CD8-positive, alpha-beta memory T cell (primary cell): ENCODE measurements at regions of chr1 and their contacts with region 1.

Region 1: GRCh38 chr1:212070720-212071302 is 35.3 kb downstream of the DTL start:
- DNase-seq: peak in 2 of 5 donors; percentile 36 to 43
- H3K4me3 ChIP-seq: no peak overlapping the region
- H3K4me3 Mint-ChIP-seq: no peak overlapping the region
- H3K27ac ChIP-seq: no peak overlapping the region
- H3K27ac Mint-ChIP-seq: peak overlapping the region in 1 of 8 donors; percentile 61
- H3K4me1 ChIP-seq: no peaks in the 10 kb centered on the region
- H3K4me1 Mint-ChIP-seq: no peaks in the 10 kb centered on the region
- H3K27me3 ChIP-seq: no peaks in the 10 kb centered on the region
- H3K27me3 Mint-ChIP-seq: no peaks in the 10 kb centered on the region

Region 2: DNA sequence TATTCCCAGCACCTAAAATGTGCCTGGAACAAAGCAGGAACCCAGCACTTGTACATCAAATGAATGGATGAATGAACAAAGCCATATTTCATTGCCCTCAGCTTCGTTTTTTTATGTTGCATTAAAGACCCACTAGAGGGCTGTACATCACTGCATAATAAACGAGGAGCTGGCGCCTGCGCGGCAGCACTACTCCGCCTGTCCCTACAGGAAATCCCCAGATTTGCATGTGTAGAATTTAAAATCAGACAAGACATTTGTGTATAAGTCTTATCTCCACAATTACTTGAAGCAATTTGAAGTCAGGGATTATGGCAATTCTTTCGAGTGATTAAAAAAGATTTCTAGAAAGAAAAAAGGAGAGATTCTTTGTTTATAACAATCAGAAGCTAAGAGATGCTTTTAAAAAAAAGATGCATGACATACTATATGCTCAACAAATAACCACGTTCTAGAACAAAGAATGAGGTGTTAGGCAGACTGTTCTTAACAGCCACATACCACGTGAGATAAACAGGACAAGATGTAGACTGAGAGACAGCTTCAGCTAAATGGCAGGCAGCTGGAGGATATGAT is 390.0 kb before region 1 on chr1:
- CTCF ChIA-PET with region 1: interaction called, 20 read pairs
- POLR2A ChIA-PET with region 1: no interaction called
- DNase-seq: peak; percentile 64 to 86 (median 77)
- H3K4me3 ChIP-seq: no peak overlapping the region
- H3K4me3 Mint-ChIP-seq: peak overlapping the region in 6 of 7 donors; percentile 15 to 50 (median 37)
- H3K27ac ChIP-seq: no peak overlapping the region
- H3K27ac Mint-ChIP-seq: peak overlapping the region; percentile 90 to 98 (median 94)
- H3K4me1 ChIP-seq: peaks cover 14% of the 10 kb centered on the region
- H3K4me1 Mint-ChIP-seq: peaks cover 24 to 30% (median 25%) of the 10 kb centered on the region in 3 donors
- H3K27me3 ChIP-seq: no peaks in the 10 kb centered on the region
- H3K27me3 Mint-ChIP-seq: no peaks in the 10 kb centered on the region

Region 3: DNA sequence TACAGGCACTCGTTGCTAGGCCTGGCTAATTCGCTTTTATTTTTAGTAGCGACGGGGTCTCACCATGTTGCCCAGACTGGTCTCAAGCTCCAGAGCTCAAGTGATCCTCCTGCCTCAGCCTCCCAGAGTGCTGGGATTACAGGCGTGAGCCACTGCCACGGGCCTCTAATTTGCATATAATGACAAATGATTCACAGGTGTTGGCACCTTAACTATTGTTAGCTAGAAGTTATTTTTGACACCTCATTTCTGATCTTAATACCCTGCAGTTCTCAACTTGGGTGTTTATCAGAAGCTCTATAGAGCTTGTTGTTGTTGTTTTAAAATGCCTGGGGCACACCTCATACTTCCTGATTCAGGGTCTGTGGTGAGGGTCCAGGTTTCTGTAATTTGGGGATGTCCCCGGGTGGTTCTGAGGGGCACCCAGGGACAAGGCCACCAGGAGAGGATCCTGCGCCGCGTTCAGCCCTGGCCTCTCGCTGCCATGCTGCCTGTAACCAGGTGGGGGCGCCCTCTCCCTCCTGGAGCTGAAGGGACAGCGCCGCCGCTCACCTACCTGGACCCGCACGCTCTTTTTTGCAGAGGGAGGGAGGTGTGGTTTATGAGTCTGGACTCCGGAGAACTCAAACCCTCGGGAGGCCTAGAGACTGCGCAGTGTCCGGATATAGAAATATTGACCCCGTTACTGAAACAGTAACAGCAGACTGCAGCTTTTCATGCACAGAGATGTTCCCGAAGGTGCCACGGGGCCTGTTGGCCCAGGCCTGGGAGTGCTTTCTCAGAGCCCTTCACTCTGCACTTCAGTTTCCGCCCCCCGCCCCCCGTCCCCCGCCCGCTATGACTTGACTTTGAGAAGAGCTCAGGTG is 372.4 kb before region 1 on chr1:
- CTCF ChIA-PET with region 1: interaction called, 10 read pairs
- POLR2A ChIA-PET with region 1: no interaction called
- DNase-seq: peak; percentile 72 to 84 (median 76)
- H3K4me3 ChIP-seq: peak overlapping the region; percentile 51
- H3K4me3 Mint-ChIP-seq: peak overlapping the region in 6 of 7 donors; percentile 65 to 84 (median 76)
- H3K27ac ChIP-seq: no peak overlapping the region
- H3K27ac Mint-ChIP-seq: peak overlapping the region in 3 of 8 donors; percentile 61 to 90 (median 78)
- H3K4me1 ChIP-seq: peaks cover 16% of the 10 kb centered on the region
- H3K4me1 Mint-ChIP-seq: peaks cover 35 to 53% (median 42%) of the 10 kb centered on the region in 3 donors
- H3K27me3 ChIP-seq: no peaks in the 10 kb centered on the region
- H3K27me3 Mint-ChIP-seq: no peaks in the 10 kb centered on the region

Region 4: GRCh38 chr1:212021563-212021962 is 49.2 kb before region 1 on chr1:
- CTCF ChIA-PET with region 1: no interaction called
- POLR2A ChIA-PET with region 1: no interaction called
- DNase-seq: no peak
- H3K4me3 ChIP-seq: no peak overlapping the region
- H3K4me3 Mint-ChIP-seq: no peak overlapping the region
- H3K27ac ChIP-seq: no peak overlapping the region
- H3K27ac Mint-ChIP-seq: no peak overlapping the region
- H3K4me1 ChIP-seq: no peaks in the 10 kb centered on the region
- H3K4me1 Mint-ChIP-seq: peaks cover 5 to 8% (median 8%) of the 10 kb centered on the region in 3 donors
- H3K27me3 ChIP-seq: no peaks in the 10 kb centered on the region
- H3K27me3 Mint-ChIP-seq: no peaks in the 10 kb centered on the region

Region 5: DNA sequence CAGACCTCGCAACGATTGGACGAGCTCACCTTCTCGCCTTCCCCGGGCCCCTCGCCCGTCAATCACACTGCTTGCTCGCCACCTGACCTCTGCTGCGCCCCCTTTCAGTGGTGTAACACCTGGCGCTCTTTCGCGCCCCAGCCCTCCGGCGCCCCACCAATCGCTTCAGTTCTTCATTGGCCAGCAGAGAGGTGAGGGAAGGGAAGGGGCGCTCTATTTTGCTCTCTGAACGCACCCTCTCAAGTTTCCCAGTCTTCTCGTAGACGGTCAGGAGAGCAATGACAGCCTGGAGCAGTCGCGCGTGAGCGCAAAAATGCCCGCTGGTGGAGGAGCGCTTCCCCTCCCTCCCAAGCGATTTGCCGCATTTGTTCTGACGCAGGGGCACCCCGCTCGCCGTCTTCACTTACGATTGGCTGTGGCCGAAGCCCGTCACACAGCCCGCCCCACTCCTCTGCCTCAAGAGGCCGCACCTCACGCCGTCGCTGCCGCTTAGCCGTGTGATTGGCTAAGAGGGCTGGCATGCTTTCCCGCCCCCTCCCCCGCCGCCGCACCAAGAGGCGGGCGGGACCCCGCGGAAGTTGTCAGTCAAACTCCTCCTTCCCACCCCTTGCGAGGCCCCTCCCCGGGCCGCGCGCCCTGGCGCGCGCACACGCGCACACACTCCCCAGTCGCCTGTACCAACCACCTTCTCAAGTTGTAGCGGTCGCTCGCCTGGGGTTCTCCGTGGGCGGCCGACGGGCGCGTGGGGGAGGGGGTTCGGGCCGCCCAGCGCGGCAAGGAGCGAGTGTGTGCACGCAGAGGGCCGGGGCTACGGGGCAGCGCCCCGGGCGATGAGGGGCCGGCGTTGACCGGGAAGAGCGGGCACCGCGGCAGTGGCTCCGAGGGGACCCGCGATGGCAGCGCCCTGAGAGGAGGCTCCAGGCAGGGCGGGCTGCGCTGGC is 214.2 kb after region 1 on chr1 and contains the start of gene PPP2R5A:
- CTCF ChIA-PET with region 1: interaction called, 34 read pairs
- POLR2A ChIA-PET with region 1: interaction called, 8 read pairs
- DNase-seq: peak; percentile 97 to 99 (median 99)
- H3K4me3 ChIP-seq: peak within 1 kb of the TSS; percentile 98
- H3K4me3 Mint-ChIP-seq: peak within 1 kb of the TSS; percentile 96 to 100 (median 99)
- H3K27ac ChIP-seq: peak within 1 kb of the TSS; percentile 97
- H3K27ac Mint-ChIP-seq: peak within 1 kb of the TSS; percentile 91 to 100 (median 98)
- H3K4me1 ChIP-seq: peaks cover 33% of the 10 kb centered on the region
- H3K4me1 Mint-ChIP-seq: peaks cover 34 to 53% (median 45%) of the 10 kb centered on the region in 3 donors
- H3K27me3 ChIP-seq: no peaks in the 10 kb centered on the region
- H3K27me3 Mint-ChIP-seq: no peaks in the 10 kb centered on the region
- total RNA-seq, gene PPP2R5A: 46.1 to 46.9 TPM

Region 6: GRCh38 chr1:212291505-212292134 is 220.8 kb after region 1 on chr1:
- CTCF ChIA-PET with region 1: interaction called, 44 read pairs
- POLR2A ChIA-PET with region 1: interaction called, 7 read pairs
- DNase-seq: peak in 2 of 5 donors; percentile 49 to 59
- H3K4me3 ChIP-seq: no peak overlapping the region
- H3K4me3 Mint-ChIP-seq: peak overlapping the region; percentile 25 to 73 (median 53)
- H3K27ac ChIP-seq: no peak overlapping the region
- H3K27ac Mint-ChIP-seq: peak overlapping the region; percentile 2 to 76 (median 46)
- H3K4me1 ChIP-seq: peaks cover 83% of the 10 kb centered on the region
- H3K4me1 Mint-ChIP-seq: peaks cover 80 to 95% (median 91%) of the 10 kb centered on the region in 3 donors
- H3K27me3 ChIP-seq: no peaks in the 10 kb centered on the region
- H3K27me3 Mint-ChIP-seq: no peaks in the 10 kb centered on the region

Region 7: GRCh38 chr1:212344905-212345304 is 274.1 kb after region 1 on chr1:
- CTCF ChIA-PET with region 1: interaction called, 12 read pairs
- POLR2A ChIA-PET with region 1: no interaction called
- DNase-seq: no peak
- H3K4me3 ChIP-seq: no peak overlapping the region
- H3K4me3 Mint-ChIP-seq: no peak overlapping the region
- H3K27ac ChIP-seq: no peak overlapping the region
- H3K27ac Mint-ChIP-seq: peak overlapping the region in 1 of 8 donors; percentile 9
- H3K4me1 ChIP-seq: no peaks in the 10 kb centered on the region
- H3K4me1 Mint-ChIP-seq: peaks cover 19 to 39% (median 23%) of the 10 kb centered on the region in 3 donors
- H3K27me3 ChIP-seq: no peaks in the 10 kb centered on the region
- H3K27me3 Mint-ChIP-seq: no peaks in the 10 kb centered on the region

Region 8: DNA sequence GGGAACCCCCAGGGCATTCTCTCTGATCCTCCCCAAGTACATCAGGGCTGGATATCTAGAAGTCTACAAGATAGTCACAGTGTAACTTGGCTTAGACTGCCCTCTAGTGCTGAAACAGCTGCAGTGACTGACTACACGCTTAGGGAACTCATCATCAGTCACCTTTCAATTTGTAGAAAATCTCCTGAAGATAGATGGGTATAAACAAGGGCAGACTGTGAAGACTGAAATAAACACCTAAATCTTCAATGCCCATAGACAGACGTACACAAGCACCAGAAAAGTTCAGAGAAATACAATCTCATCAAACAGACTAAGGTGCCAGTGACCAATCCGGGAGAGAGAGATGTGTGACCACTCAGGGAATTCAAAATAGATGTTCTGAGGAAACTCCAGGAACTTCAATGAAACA is 297.3 kb after region 1 on chr1:
- CTCF ChIA-PET with region 1: interaction called, 46 read pairs
- POLR2A ChIA-PET with region 1: no interaction called
- DNase-seq: peak; percentile 13 to 64 (median 40)
- H3K4me3 ChIP-seq: no peak overlapping the region
- H3K4me3 Mint-ChIP-seq: no peak overlapping the region
- H3K27ac ChIP-seq: no peak overlapping the region
- H3K27ac Mint-ChIP-seq: peak overlapping the region in 2 of 8 donors; percentile 6 to 25
- H3K4me1 ChIP-seq: no peaks in the 10 kb centered on the region
- H3K4me1 Mint-ChIP-seq: peaks cover 0 to 11% (median 0%) of the 10 kb centered on the region in 3 donors
- H3K27me3 ChIP-seq: no peaks in the 10 kb centered on the region
- H3K27me3 Mint-ChIP-seq: no peaks in the 10 kb centered on the region

Region 9: GRCh38 chr1:212749821-212750535 is 679.2 kb after region 1 on chr1:
- CTCF ChIA-PET with region 1: no interaction called
- POLR2A ChIA-PET with region 1: no interaction called
- DNase-seq: peak in 1 of 5 donors; percentile 24
- H3K4me3 ChIP-seq: no peak overlapping the region
- H3K4me3 Mint-ChIP-seq: peak overlapping the region in 2 of 7 donors; percentile 6 to 23
- H3K27ac ChIP-seq: no peak overlapping the region
- H3K27ac Mint-ChIP-seq: peak overlapping the region in 6 of 8 donors; percentile 0 to 85 (median 45)
- H3K4me1 ChIP-seq: peaks cover 44% of the 10 kb centered on the region
- H3K4me1 Mint-ChIP-seq: peaks cover 28 to 44% (median 37%) of the 10 kb centered on the region in 3 donors
- H3K27me3 ChIP-seq: no peaks in the 10 kb centered on the region
- H3K27me3 Mint-ChIP-seq: no peaks in the 10 kb centered on the region